ENCODE measurements at regions of chr22 and their contacts with region 1.

Region 1: GRCh38 chr22:45105281-45105702 is 58.4 kb upstream of the NUP50 start:
- DNase-seq: peak; percentile 54 to 86
- H3K4me3 ChIP-seq: peak overlapping the region; percentile 39; the same call in 1 of the 2 replicates
- H3K27ac ChIP-seq: peak overlapping the region; percentile 60
- H3K4me1 ChIP-seq: peaks cover 12% of the 10 kb centered on the region; the same call in 1 of the 2 replicates
- H3K27me3 ChIP-seq: peaks cover 48% of the 10 kb centered on the region
- CTCF ChIP-seq: no peak

Region 2: DNA sequence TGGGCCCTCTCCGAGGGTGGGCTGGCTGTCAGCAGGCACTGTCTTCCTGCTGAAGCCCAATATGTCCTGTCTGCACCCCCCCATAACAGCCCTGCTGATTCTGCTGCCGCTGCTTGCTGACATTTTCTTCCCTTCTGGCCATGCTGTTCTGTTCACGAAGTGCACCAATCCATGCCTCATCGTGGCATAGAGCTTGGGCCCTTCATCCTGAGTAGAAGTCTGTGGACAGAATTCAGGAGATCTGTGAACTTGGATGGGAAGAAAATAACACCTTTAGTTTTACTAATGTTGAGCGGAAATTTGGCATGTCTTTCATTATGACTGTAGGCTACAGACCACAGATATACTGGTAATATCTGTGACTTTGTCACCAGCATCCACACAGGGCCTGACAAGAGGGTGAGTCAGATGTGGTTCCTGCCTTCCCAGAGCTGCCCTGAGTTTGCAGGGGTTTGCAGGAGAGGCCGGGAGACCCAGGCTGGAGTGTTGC is 149.5 kb after region 1 on chr22:
- CTCF ChIA-PET with region 1: no interaction called
- POLR2A ChIA-PET with region 1: no interaction called
- intact Hi-C with region 1: loop called (anchors 2 kb)
- DNase-seq: no peak
- H3K4me3 ChIP-seq: no peak overlapping the region
- H3K27ac ChIP-seq: no peak overlapping the region
- H3K4me1 ChIP-seq: no peaks in the 10 kb centered on the region
- H3K27me3 ChIP-seq: no peaks in the 10 kb centered on the region
- CTCF ChIP-seq: no peak

Region 3: GRCh38 chr22:45344334-45344733 is 239.0 kb after region 1 on chr22:
- CTCF ChIA-PET with region 1: interaction called, 12 read pairs
- POLR2A ChIA-PET with region 1: no interaction called
- intact Hi-C with region 1: no loop called
- DNase-seq: no peak
- H3K4me3 ChIP-seq: no peak overlapping the region
- H3K27ac ChIP-seq: no peak overlapping the region
- H3K4me1 ChIP-seq: no peaks in the 10 kb centered on the region
- H3K27me3 ChIP-seq: no peaks in the 10 kb centered on the region
- CTCF ChIP-seq: no peak

Measured in PC-9 (cell line).